ENCODE measurements at regions of chr15 and their contacts with region 1.

Region 1: DNA sequence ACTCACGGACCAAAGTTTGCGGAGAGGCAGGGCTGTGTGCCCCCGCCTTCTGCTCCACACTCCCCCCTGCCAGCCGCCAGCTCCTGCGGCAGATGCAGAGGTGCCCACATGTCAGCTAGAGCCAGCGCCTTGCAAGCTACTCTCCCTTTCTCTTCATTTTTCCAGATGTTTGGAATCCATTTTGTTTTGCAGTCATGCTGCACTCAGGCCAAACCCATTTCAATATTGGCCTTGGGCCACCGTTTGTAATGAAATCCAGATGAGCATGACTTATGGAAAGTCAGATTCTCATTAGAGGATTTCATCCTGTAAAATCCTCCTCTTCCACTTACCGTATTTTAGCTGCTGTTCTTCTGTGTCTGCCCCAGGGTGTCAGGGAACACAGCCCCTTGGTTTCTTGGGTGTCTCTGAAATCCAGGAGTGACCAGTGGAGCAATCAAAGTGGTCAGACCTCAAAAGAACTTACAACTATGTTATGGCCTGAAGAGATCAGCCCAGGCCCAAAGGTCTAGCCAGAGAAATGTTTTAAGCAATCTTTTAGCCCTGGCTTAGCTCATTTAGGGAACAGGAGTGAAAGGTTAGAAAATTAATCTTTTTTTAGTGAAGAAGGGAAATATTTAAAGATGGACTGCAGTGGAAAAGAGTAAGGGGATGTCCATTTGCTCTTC is 65.8 kb downstream of the AAGAB start:
- DNase-seq: no peak
- H3K4me3 ChIP-seq: no peak overlapping the region
- H3K27ac ChIP-seq: peak overlapping the region in 33 of 59 donors; percentile 9 to 81 (median 57)
- H3K27me3 ChIP-seq: no peaks in the 10 kb centered on the region
- CTCF ChIP-seq: no peak

Region 2: DNA sequence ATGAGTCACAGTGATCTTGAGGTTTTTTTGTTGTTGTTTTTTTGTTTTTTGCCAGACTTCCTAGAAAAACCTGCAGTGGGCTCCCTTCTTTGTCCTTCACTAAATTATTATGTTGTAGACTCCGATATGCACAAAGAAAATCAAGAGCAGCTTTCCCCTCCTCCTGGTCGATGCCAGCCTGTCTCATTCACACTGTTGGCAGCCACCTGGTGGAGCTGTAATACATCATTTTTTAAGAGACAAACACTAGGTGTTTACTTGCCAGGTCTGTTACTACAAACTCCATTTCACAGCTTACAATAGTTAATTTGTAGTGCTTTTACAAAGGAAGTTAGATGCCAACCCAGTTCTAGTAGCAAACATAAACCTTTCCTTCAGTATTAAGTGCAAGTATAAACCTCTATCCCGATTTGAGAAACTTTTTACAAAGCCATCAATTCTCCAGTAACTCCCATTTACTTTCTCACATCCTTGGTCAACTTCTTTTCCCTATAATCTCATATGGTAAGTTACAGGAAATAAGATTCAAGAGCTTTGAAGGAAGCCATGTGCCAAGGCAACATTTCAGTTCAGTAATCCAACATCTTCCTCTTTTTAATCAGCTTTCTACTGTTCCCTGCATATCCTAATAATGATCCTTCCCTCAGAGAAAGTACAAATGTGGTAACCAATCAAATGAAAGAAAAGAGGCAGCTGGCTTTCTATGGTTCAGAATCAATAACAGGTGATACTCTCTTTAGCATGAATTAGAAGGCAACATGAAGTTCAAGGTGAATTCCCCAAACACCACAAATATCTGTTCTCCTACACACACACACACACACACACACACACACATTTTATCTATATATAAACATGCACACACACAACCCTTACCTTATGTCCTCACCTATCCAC is 51.8 kb after region 1 on chr15:
- intact Hi-C with region 1: loop called in 1 of 2 experiments (anchors 5 kb)
- DNase-seq: no peak
- H3K4me3 ChIP-seq: no peak overlapping the region
- H3K27ac ChIP-seq: no peak overlapping the region
- H3K27me3 ChIP-seq: no peaks in the 10 kb centered on the region
- CTCF ChIP-seq: peak in 26 of 56 donors; percentile 10 to 52 (median 25)

Measured in dorsolateral prefrontal cortex (tissue), 120 donors.